ENCODE measurements at regions of chr17 and their contacts with region 1.

Region 1: DNA sequence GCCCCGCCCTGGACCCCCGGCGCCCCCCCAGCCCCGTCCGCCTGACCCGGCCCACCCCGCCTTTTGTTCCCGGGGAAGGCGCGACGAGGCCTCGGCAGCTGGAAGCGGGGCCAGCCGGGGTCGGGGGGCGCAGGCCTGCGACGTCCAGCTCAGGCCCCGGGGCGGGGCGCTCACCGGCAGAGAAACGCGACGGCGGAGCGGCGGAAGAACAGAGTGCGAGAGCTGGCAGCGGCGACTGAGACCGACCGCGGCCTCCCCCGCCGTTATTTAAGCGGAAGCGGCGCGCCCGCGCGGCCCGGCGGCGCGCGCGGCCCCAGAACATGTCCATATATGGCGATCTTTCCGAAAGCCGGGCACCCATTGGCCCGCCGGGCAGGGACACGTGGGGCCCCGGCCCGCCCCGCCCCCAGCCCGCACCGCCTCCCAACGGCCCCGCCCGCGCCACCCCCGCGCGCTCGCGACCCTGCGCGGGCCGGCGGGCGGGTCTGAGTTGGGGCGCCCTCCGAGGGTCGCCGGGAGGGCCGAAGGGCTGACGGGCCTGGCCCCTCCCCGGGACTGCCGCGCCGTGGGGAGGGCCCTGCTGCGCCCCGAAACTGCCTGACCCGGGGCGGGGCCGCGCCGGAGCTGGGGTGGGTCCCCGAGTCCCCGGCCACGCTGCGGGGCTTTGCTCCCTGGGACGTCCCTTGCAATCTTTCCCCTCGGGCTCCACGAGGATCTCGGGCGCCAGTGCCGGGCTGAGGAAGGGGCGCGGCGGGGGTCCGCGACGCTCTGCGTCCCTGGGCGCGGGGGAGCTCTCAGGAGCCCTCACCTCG is at the start of gene ACTG1:
- DNase-seq: peak; percentile 76 to 95
- H3K4me3 ChIP-seq: peak within 1 kb of the TSS; percentile 81 to 96
- H3K27ac ChIP-seq: peak within 1 kb of the TSS; percentile 95 to 100
- H3K4me1 ChIP-seq: peaks cover 4 to 20% of the 10 kb centered on the region in 2 donors
- H3K27me3 ChIP-seq: no peaks in the 10 kb centered on the region
- CTCF ChIP-seq: no peak
- total RNA-seq, gene ACTG1: 6,075 TPM

Region 2: GRCh38 chr17:81379523-81379942 is 133.2 kb before region 1 on chr17:
- intact Hi-C with region 1: no loop called
- DNase-seq: no peak
- H3K4me3 ChIP-seq: no peak overlapping the region
- H3K27ac ChIP-seq: no peak overlapping the region
- H3K4me1 ChIP-seq: no peaks in the 10 kb centered on the region
- H3K27me3 ChIP-seq: no peaks in the 10 kb centered on the region
- CTCF ChIP-seq: no peak

Region 3: DNA sequence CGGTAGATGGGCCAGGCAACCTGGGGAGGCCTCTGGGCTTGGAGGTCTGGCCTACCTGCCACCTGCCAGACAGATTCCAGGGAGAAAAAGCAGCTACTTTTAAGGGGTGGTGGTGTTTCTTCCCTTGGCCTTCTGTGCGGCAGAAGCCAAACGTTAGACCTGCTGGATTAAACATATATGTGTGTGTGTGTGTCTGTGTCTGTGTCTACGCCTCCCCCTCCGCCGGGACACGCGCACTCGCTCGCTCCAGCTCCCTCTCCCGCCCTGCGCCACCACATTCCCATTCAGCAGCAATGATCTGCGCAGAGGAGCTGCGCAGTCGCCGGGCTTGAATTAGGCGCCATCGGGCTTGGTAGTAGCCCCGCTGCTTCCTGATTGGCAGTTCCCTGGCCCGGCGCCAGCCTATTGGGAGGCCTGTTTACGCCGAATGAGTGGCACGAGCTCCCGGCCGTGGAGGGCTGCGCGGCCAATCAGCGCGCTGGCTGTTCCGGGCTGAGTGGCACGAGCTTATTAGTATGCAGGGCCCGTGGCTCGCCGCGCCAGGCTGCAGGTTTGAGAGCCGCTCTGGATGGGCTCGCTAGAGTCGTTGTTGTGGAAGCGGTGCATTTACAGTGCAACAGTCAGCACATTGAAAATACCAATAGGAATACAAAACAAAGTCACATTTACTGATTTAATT is 117.7 kb before region 1 on chr17 and contains the start of gene BAHCC1:
- intact Hi-C with region 1: loop called (anchors 1 kb)
- DNase-seq: peak; percentile 100
- H3K4me3 ChIP-seq: peak within 1 kb of the TSS; percentile 81 to 93
- H3K27ac ChIP-seq: peak within 1 kb of the TSS; percentile 94 to 97
- H3K4me1 ChIP-seq: peaks cover 14 to 22% of the 10 kb centered on the region in 2 donors
- H3K27me3 ChIP-seq: no peaks in the 10 kb centered on the region
- CTCF ChIP-seq: no peak
- total RNA-seq, gene BAHCC1: 29.1 TPM

Region 4: DNA sequence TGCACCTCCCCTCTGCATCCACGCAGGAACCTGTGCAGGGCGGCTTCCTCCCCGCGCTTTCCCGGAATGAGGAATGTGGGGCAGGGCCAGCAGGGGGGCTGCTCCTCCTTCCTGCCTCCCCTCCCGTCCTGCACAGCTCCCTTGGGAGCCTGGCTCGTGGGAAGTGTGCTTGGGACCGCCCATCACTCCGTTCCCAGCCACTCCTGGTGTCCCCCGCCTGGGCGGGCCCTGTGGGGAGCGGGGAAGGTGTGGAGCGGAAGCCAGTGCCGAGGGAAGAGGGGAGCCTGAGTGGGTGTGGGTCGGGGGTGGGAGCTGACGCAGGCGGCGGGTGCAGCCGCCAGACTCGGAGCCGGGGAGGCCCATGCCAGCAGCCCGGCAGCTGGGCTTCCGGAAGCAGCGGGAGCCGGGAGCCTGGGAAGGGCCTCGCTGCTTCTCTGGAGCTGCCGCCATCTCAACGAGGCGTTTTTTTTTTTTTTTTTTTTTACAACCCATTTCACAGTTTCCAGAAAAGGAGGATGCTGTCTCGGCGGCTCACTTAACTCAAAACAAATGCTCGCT is 93.4 kb before region 1 on chr17:
- intact Hi-C with region 1: loop called (anchors 2 kb)
- DNase-seq: peak; percentile 73 to 98
- H3K4me3 ChIP-seq: peak overlapping the region; percentile 46 to 56
- H3K27ac ChIP-seq: peak overlapping the region; percentile 91 to 100
- H3K4me1 ChIP-seq: peaks cover 61 to 68% of the 10 kb centered on the region in 2 donors
- H3K27me3 ChIP-seq: no peaks in the 10 kb centered on the region
- CTCF ChIP-seq: no peak

Region 5: DNA sequence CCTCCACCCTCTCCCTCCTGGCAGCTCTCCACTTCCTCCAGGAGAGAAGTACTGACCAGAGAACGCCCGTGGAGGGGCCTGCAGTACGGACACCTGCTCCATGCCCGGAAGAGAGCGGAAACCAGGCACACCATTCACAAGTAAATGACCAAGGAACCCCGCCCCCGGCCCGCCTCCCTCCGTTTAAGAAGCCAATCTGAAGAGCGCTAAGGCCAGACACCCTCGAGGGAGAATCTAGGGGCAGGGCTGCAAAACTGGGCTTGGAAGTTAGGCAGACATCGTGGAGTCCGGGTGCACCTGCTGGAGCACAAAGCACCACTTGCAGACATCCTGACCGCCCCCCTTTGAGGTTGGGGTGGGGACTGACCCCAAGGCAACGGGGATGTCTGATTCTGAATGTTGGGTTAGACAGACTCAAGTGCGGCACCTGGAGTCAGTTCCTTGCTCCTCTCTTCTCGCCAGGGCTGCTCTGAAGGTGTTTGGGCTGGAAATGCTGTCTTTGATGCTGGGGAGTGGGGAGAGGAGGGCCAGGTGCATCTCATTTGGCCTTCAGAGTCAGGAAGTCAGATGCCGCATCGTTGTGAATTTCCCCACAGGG is 40.4 kb after region 1 on chr17:
- intact Hi-C with region 1: loop called (anchors 2 kb)
- DNase-seq: peak; percentile 59 to 90
- H3K4me3 ChIP-seq: peak overlapping the region; percentile 81 to 83
- H3K27ac ChIP-seq: peak overlapping the region; percentile 75 to 93
- H3K4me1 ChIP-seq: peaks cover 17 to 34% of the 10 kb centered on the region in 2 donors
- H3K27me3 ChIP-seq: no peaks in the 10 kb centered on the region
- CTCF ChIP-seq: no peak

Region 6: GRCh38 chr17:81566461-81567126 is 53.8 kb after region 1 on chr17:
- intact Hi-C with region 1: loop called (anchors 2 kb)
- DNase-seq: peak in 1 of 2 donors; percentile 93
- H3K4me3 ChIP-seq: peak overlapping the region; percentile 39
- H3K27ac ChIP-seq: peak overlapping the region; percentile 86 to 93
- H3K4me1 ChIP-seq: peaks cover 31 to 52% of the 10 kb centered on the region in 2 donors
- H3K27me3 ChIP-seq: no peaks in the 10 kb centered on the region
- CTCF ChIP-seq: no peak

Region 7: GRCh38 chr17:81860756-81861518 is 348.2 kb after region 1 on chr17:
- intact Hi-C with region 1: loop called (anchors 10 kb)
- DNase-seq: peak; percentile 99 to 100
- H3K4me3 ChIP-seq: peak overlapping the region; percentile 83 to 90
- H3K27ac ChIP-seq: peak overlapping the region; percentile 96
- H3K4me1 ChIP-seq: peaks cover 10 to 29% of the 10 kb centered on the region in 2 donors
- H3K27me3 ChIP-seq: no peaks in the 10 kb centered on the region
- CTCF ChIP-seq: no peak

Measured in ascending aorta (tissue), 2 donors.